Heart right ventricle (tissue), 16 donors: ENCODE measurements at regions of chr19 and their contacts with region 1.

Region 1: GRCh38 chr19:15332311-15332996 is at the start of gene BRD4:
- DNase-seq: peak; percentile 64 to 80
- ATAC-seq: peak; percentile 69 to 86 (median 81)
- H3K4me3 ChIP-seq: peak within 1 kb of the TSS; percentile 90 to 99 (median 96)
- H3K27ac ChIP-seq: peak within 1 kb of the TSS; percentile 84 to 96 (median 93)
- H3K4me1 ChIP-seq: peaks cover 5 to 76% (median 55%) of the 10 kb centered on the region in 9 donors
- H3K27me3 ChIP-seq: no peaks in the 10 kb centered on the region
- CTCF ChIP-seq: no peak
- total RNA-seq, gene BRD4: 51.6 to 85.1 (median 54.7) TPM

Region 2: GRCh38 chr19:15280915-15281683 is 51.4 kb before region 1 on chr19:
- intact Hi-C with region 1: loop called in 3 of 10 experiments (anchors 5 to 10 kb)
- DNase-seq: peak; percentile 83 to 88
- ATAC-seq: peak; percentile 86 to 93 (median 90)
- H3K4me3 ChIP-seq: peak overlapping the region in 1 of 10 donors; percentile 16
- H3K27ac ChIP-seq: peak overlapping the region in 9 of 10 donors; percentile 11 to 81 (median 62)
- H3K4me1 ChIP-seq: peaks cover 66 to 100% (median 100%) of the 10 kb centered on the region in 9 donors
- H3K27me3 ChIP-seq: no peaks in the 10 kb centered on the region
- CTCF ChIP-seq: peak in 7 of 9 donors; percentile 14 to 56 (median 39)